GM10248 (cell line): ENCODE measurements at regions of chr7 and their contacts with region 1.

Region 1: GRCh38 chr7:66557608-66558143 is 71.0 kb upstream of the KCTD7 start:
- DNase-seq: peak; percentile 83
- CTCF ChIP-seq: peak; percentile 99

Region 2: GRCh38 chr7:66529883-66530610 is 27.6 kb before region 1 on chr7:
- CTCF ChIA-PET with region 1: interaction called, 13 read pairs
- POLR2A ChIA-PET with region 1: no interaction called
- DNase-seq: no peak
- CTCF ChIP-seq: no peak

Region 3: DNA sequence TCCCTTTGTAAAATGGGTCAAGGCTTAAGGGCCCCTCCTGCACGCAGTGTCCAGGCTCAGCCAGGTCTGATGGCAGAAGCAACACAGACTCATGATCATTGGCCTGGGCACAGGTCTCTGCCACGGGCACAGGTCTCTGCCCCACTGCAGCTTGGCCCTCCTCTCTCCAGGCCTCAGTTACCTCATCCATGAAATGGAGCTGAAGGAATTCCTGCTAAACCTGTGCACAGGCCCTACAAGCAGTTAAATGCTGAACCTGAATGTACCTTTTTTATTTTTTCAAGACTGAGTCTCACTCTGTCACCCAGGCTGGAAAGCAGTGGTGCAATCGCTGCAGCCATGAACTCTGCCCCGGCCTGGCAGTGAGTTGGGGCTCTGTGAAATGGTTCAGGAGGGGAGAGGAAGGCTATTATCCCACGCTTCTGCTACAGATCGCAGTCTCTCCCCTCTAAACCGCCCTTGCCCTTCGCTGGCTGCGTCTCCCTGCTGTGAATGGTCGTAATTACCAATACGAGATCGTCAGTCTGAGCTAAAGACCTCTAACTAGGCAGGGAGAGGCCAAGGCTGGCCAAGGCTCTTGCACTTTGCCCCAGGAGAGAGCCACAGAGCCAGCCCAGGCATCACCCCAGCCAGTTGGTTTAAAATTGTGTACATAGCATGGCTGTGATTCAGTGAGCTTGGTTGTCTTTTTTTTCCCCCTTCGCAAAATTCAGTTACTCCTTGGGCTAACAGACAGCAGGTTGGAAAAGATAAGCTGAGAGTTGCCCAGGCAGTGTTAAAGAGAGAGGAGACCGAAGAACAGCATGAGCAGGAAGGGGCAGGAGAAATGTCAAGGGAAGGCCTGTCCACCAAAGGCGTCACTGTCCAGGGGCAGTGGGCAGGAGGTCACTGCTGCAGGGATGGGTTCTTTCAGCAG is 22.0 kb before region 1 on chr7:
- CTCF ChIA-PET with region 1: interaction called, 22 read pairs
- POLR2A ChIA-PET with region 1: no interaction called
- DNase-seq: no peak
- CTCF ChIP-seq: no peak

Region 4: GRCh38 chr7:66542528-66543269 is 15.0 kb before region 1 on chr7:
- CTCF ChIA-PET with region 1: interaction called, 22 read pairs
- POLR2A ChIA-PET with region 1: interaction called, 3 read pairs
- DNase-seq: no peak
- CTCF ChIP-seq: no peak

Region 5: DNA sequence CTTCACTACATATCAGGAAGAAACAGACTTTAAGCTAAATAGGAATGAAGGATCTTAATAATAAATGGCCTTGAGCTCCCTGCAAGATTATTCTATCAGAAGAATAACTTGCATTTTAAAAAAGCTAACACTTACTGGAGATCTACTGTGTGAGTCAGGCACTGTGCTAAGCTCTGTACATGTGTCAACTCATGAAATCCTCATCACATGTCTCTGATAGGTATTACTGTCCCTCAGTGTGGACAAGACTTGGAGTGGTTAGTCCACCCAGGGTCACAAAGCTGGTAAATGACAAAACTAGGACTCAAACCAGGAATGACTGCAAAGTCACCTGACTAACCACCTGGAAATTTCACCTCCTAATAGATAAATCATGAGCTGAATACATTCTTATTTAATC is 13.9 kb after region 1 on chr7:
- CTCF ChIA-PET with region 1: interaction called, 31 read pairs
- POLR2A ChIA-PET with region 1: no interaction called
- DNase-seq: no peak
- CTCF ChIP-seq: no peak